ENCODE measurements at regions of chr18 and their contacts with region 1.

Region 1: DNA sequence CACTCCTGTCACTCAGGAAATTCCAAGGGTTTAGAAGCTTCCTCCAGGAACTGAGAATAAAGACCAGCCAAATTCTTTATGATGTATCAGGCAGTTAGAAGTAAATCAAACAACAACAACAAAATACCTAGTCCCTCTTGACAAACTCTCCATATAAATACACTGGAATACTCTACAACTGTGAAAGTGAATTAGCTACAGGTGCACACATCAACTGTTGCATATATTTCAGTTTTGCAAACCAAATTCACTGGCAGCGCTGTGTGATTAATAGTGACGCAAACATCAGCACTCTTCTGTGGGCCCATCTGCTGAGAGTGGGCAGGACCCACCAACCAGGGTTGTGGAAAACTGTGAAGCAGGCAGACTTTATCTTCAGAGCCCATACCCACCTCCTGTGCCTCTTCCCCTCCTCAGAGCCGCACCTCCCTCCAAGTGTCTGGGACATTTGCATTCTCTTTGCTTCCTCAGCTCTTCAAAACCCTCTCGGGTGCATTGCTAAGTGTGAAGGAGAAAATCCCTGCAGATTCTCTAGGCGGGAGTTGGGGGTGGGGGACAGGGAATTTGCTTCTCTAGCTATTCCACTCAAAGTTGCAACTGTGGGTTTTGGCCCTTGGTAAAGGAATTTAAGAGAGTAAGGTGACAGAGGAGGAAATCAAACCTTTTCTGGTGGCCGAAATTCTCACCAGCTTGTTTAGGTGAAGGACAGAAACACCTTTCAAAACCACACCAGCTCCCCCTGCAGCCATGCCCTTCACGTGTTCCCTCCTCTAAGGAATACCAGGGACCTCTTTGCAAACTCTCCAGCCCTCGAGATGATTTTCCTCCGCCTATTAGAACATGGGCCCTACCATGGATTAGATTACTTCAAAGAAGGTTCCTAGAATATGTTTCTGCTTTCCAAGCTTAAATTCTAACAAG is 119.3 kb downstream of the MRO start:
- DNase-seq: no peak
- ATAC-seq: no peak
- H3K4me3 ChIP-seq: no peak overlapping the region
- H3K27ac ChIP-seq: no peak overlapping the region
- H3K4me1 ChIP-seq: peaks cover 0 to 6% (median 0%) of the 10 kb centered on the region in 9 donors
- H3K27me3 ChIP-seq: no peaks in the 10 kb centered on the region
- CTCF ChIP-seq: no peak

Region 2: DNA sequence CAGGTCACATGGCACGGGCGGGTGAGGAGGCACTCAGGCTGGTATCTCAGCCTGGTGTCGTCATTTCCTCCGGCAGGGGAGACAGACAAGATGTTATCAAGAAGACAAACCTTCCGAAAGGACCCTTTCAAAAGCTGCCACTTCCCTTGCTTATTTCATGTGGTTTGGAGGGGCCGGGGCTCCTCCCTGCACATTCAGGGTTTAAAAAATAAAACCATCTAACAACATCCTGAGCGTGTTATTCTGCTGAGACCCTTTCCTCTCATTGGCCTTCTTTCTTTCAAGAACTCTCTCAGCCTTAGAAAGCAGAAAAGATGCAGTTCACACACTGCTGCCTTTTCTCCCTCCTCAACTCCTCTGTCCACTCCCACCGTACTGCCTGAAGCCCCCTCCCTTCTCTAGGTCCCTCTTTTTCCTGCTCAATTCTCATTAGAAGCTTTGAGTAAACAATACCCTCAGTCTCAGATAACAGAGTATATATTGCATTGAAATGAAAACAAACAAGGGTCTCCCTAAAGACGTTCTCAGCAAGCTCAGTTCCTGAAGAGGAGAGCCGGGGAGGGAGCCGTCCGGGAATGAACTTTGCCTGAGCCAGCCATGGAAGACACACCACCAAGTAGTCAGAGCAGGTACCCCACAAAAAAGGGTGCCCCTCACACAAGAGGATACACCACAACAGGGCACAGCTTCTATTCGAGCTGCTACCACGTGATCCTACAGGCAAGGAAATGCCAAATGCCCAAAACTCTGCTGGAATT is 1759.5 kb before region 1 on chr18:
- intact Hi-C with region 1: loop called in 1 of 10 experiments (anchors 5 kb)
- DNase-seq: no peak
- ATAC-seq: no peak
- H3K4me3 ChIP-seq: peak overlapping the region in 5 of 10 donors; percentile 1 to 94 (median 43)
- H3K27ac ChIP-seq: peak overlapping the region in 9 of 10 donors; percentile 63 to 99 (median 81)
- H3K4me1 ChIP-seq: peaks cover 59 to 99% (median 97%) of the 10 kb centered on the region in 9 donors
- H3K27me3 ChIP-seq: no peaks in the 10 kb centered on the region
- CTCF ChIP-seq: no peak